Activated CD4-positive, alpha-beta T cell treated with anti-CD3 and anti-CD28 coated beads, Interleukin-2, amount 10 ng/mL, durations not matched to agents 24 days and 14 days (primary cell): ENCODE measurements at regions of chr19 and their contacts with region 1.

Region 1: DNA sequence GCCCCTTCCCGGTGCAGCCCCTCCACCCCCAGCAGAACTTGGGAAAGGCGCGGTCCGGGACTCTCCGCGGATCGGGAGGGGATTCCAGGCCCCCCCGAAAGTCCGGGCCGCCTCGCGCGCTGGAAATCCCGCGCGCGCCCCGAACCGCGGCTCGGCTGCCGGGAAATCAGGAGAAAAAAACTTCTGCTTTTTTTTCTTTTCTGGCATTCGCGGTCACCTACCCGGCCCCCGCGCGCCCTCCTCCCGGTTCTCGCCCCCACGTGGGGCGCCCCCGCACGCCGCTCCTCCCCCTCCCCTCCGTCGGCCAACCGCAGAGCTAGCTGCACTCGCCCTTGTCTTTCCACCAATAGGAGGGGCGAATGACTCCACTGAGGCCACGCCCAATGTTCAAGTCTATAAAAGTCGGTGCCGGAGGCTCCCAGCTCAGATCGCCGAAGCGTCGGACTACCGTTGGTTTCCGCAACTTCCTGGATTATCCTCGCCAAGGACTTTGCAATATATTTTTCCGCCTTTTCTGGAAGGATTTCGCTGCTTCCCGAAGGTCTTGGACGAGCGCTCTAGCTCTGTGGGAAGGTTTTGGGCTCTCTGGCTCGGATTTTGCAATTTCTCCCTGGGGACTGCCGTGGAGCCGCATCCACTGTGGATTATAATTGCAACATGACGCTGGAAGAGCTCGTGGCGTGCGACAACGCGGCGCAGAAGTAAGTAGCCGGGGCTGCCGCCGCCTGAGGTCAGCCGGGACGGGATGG is at the start of gene GADD45B:
- DNase-seq: peak; percentile 99
- H3K4me3 Mint-ChIP-seq: peak within 1 kb of the TSS; percentile 100
- H3K27ac Mint-ChIP-seq: peak within 1 kb of the TSS; percentile 96
- H3K4me1 Mint-ChIP-seq: peaks cover 27% of the 10 kb centered on the region
- H3K27me3 Mint-ChIP-seq: peaks cover 5% of the 10 kb centered on the region
- total RNA-seq, gene GADD45B: 101 and 102 TPM in 2 replicates

Region 2: GRCh38 chr19:2455851-2456570 is 19.9 kb before region 1 on chr19:
- intact Hi-C with region 1: loop called (anchors 2 kb)
- DNase-seq: peak; percentile 87
- H3K4me3 Mint-ChIP-seq: peak overlapping the region; percentile 85
- H3K27ac Mint-ChIP-seq: peak overlapping the region; percentile 90
- H3K4me1 Mint-ChIP-seq: peaks cover 22% of the 10 kb centered on the region
- H3K27me3 Mint-ChIP-seq: no peaks in the 10 kb centered on the region

Region 3: DNA sequence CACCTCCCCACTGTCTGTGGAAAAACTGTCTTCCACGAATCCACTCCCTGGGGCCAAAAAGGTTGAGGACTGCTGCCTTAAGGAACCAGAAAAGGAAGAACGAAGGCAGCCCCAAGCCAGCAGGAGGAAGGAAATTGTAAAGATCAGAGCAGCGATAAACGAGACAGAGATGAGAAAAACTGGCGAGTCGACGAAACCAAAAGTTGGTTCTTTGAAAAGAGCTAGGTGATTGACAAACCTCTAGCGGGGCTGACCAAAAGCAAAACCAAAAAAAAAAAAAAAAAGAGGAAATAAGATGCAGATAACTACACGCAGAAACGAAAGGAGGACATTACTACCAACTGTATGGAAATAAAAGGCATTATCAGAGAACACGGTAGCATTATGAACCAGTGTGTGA is 77.0 kb after region 1 on chr19:
- intact Hi-C with region 1: loop called (anchors 2 kb)
- DNase-seq: peak; percentile 92
- H3K4me3 Mint-ChIP-seq: peak overlapping the region; percentile 72
- H3K27ac Mint-ChIP-seq: peak overlapping the region; percentile 78
- H3K4me1 Mint-ChIP-seq: peaks cover 31% of the 10 kb centered on the region
- H3K27me3 Mint-ChIP-seq: peaks cover 4% of the 10 kb centered on the region

Region 4: GRCh38 chr19:2578901-2579677 is 103.2 kb after region 1 on chr19:
- intact Hi-C with region 1: loop called (anchors 1 kb)
- DNase-seq: peak; percentile 90
- H3K4me3 Mint-ChIP-seq: peak overlapping the region; percentile 58
- H3K27ac Mint-ChIP-seq: no peak overlapping the region
- H3K4me1 Mint-ChIP-seq: peaks cover 2% of the 10 kb centered on the region
- H3K27me3 Mint-ChIP-seq: peaks cover 12% of the 10 kb centered on the region

Region 5: GRCh38 chr19:2610637-2611482 is 135.0 kb after region 1 on chr19:
- intact Hi-C with region 1: loop called (anchors 1 kb)
- DNase-seq: peak; percentile 96
- H3K4me3 Mint-ChIP-seq: peak overlapping the region; percentile 87
- H3K27ac Mint-ChIP-seq: peak overlapping the region; percentile 38
- H3K4me1 Mint-ChIP-seq: peaks cover 37% of the 10 kb centered on the region
- H3K27me3 Mint-ChIP-seq: peaks cover 13% of the 10 kb centered on the region

Region 6: GRCh38 chr19:2618611-2619010 is 142.7 kb after region 1 on chr19:
- intact Hi-C with region 1: loop called (anchors 1 kb)
- DNase-seq: peak; percentile 82
- H3K4me3 Mint-ChIP-seq: peak overlapping the region; percentile 63
- H3K27ac Mint-ChIP-seq: peak overlapping the region; percentile 97
- H3K4me1 Mint-ChIP-seq: peaks cover 55% of the 10 kb centered on the region
- H3K27me3 Mint-ChIP-seq: no peaks in the 10 kb centered on the region